ENCODE measurements at regions of chr19 and their contacts with region 1.

Region 1: DNA sequence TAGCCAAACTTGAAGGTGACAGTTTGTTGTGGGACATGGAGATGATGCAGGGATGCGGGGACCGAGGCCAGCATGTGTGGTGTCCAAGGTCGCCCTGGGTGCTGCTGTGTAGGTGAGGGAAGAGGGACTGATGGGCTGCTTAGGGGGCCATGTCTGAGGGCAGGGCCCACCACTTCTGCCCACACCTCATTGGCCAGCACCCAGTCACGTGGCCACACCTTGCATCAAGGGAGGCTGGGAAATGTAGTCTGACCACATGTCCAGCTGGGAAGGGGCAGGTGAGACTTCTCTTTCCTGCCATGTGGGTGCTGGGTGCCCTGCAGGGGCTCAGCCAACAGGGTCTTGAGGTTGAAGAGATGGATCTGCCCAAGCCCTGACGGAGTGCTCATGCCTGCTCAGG is 88.9 kb downstream of the KDM4B start:
- DNase-seq: no peak
- ATAC-seq: peak in 2 of 4 donors; percentile 11 to 30
- H3K4me3 ChIP-seq: no peak overlapping the region
- H3K27ac ChIP-seq: no peak overlapping the region
- H3K4me1 ChIP-seq: no peaks in the 10 kb centered on the region
- H3K27me3 ChIP-seq: no peaks in the 10 kb centered on the region
- CTCF ChIP-seq: no peak

Region 2: DNA sequence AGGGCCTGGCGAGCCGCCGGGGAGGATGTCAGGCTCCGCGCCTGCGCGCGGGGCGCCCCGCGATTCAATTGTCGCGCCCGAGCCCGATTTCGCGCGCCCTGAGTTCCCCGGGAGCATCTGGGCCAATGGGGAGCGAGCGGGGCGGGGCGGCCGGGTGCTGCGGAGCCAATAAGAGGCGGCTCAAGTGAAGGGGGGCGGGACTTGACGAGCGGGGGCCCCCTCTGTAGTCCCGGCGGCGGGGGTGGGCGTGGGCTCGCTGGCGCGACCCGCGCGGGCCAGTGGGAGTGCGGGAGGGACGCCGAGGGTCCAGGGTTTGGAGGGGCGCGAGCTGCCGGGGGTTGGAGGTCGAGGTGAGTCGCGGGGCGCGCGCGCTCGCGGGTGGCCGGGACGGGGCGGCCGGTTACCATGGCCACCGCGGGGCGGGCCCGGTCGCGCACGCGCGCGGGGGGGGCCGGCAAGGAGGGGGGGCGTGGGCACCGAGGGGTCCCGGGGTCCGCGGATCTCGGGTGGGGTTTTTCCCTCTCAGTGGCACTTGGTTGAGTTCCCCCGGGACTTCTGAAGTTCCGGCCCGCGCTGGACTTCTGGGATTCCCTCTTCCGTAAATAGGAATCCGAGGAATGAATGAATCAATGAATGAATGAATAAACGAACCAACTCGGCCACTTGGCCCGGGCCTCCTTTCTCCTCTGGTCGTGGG is 147.8 kb before region 1 on chr19:
- intact Hi-C with region 1: no loop called
- DNase-seq: peak; percentile 84 to 95 (median 88)
- ATAC-seq: peak; percentile 93 to 98 (median 96)
- H3K4me3 ChIP-seq: peak overlapping the region; percentile 44 to 72 (median 53)
- H3K27ac ChIP-seq: no peak overlapping the region
- H3K4me1 ChIP-seq: peaks cover 0 to 11% (median 9%) of the 10 kb centered on the region in 3 donors
- H3K27me3 ChIP-seq: no peaks in the 10 kb centered on the region
- CTCF ChIP-seq: no peak

Region 3: DNA sequence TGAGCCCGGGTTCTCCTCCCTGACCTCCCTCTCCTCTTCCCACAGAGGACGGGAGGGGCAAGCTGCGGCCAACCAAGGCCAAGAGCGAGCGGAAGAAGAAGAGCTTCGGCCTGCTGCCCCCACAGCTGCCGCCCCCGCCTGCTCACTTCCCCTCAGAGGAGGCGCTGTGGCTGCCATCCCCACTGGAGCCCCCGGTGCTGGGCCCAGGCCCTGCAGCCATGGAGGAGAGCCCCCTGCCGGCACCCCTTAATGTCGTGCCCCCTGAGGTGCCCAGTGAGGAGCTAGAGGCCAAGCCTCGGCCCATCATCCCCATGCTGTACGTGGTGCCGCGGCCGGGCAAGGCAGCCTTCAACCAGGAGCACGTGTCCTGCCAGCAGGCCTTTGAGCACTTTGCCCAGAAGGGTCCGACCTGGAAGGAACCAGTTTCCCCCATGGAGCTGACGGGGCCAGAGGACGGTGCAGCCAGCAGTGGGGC is 73.2 kb after region 1 on chr19:
- intact Hi-C with region 1: no loop called
- DNase-seq: no peak
- ATAC-seq: no peak
- H3K4me3 ChIP-seq: no peak overlapping the region
- H3K27ac ChIP-seq: peak overlapping the region in 2 of 4 donors; percentile 33 to 86
- H3K4me1 ChIP-seq: peaks cover 33 to 41% (median 40%) of the 10 kb centered on the region in 3 donors
- H3K27me3 ChIP-seq: no peaks in the 10 kb centered on the region
- CTCF ChIP-seq: no peak

Region 4: GRCh38 chr19:5147978-5148793 is 90.3 kb after region 1 on chr19:
- intact Hi-C with region 1: loop called in 1 of 3 experiments (anchors 10 kb)
- DNase-seq: peak in 2 of 6 donors; percentile 1 to 45
- ATAC-seq: no peak
- H3K4me3 ChIP-seq: no peak overlapping the region
- H3K27ac ChIP-seq: no peak overlapping the region
- H3K4me1 ChIP-seq: no peaks in the 10 kb centered on the region
- H3K27me3 ChIP-seq: no peaks in the 10 kb centered on the region
- CTCF ChIP-seq: no peak

Measured in pancreas (tissue), 10 donors.